CD8-positive, alpha-beta memory T cell (primary cell): ENCODE measurements at regions of chrX and their contacts with region 1.

Region 1: GRCh38 chrX:24054182-24055042 is at the start of gene EIF2S3:
- DNase-seq: peak; percentile 72 to 96 (median 90)
- H3K4me3 ChIP-seq: peak within 1 kb of the TSS; percentile 90
- H3K4me3 Mint-ChIP-seq: peak within 1 kb of the TSS in 1 of 7 donors; percentile 95
- H3K27ac ChIP-seq: peak within 1 kb of the TSS; percentile 90
- H3K27ac Mint-ChIP-seq: peak within 1 kb of the TSS in 2 of 8 donors; percentile 99 to 100
- H3K4me1 ChIP-seq: peaks cover 7% of the 10 kb centered on the region
- H3K4me1 Mint-ChIP-seq: peaks cover 8 to 16% (median 13%) of the 10 kb centered on the region in 3 donors
- H3K27me3 ChIP-seq: no peaks in the 10 kb centered on the region
- H3K27me3 Mint-ChIP-seq: no peaks in the 10 kb centered on the region
- total RNA-seq, gene EIF2S3: 259 to 277 TPM

Region 2: GRCh38 chrX:23742697-23743622 is 311.5 kb before region 1 on chrX and contains the start of gene ACOT9:
- CTCF ChIA-PET with region 1: interaction called, 3 read pairs
- POLR2A ChIA-PET with region 1: interaction called, 13 read pairs
- DNase-seq: peak; percentile 45 to 79 (median 75)
- H3K4me3 ChIP-seq: peak within 1 kb of the TSS; percentile 62
- H3K4me3 Mint-ChIP-seq: peak within 1 kb of the TSS; percentile 85 to 95 (median 90)
- H3K27ac ChIP-seq: peak within 1 kb of the TSS; percentile 71
- H3K27ac Mint-ChIP-seq: peak within 1 kb of the TSS; percentile 86 to 95 (median 93)
- H3K4me1 ChIP-seq: peaks cover 17% of the 10 kb centered on the region
- H3K4me1 Mint-ChIP-seq: peaks cover 27 to 60% (median 45%) of the 10 kb centered on the region in 3 donors
- H3K27me3 ChIP-seq: no peaks in the 10 kb centered on the region
- H3K27me3 Mint-ChIP-seq: no peaks in the 10 kb centered on the region
- total RNA-seq, gene ACOT9: 31.1 to 33.9 TPM

Region 3: GRCh38 chrX:23901805-23902204 is 152.6 kb before region 1 on chrX:
- CTCF ChIA-PET with region 1: interaction called, 47 read pairs
- POLR2A ChIA-PET with region 1: interaction called, 17 read pairs
- DNase-seq: peak in 4 of 5 donors; percentile 1 to 54 (median 29)
- H3K4me3 ChIP-seq: no peak overlapping the region
- H3K4me3 Mint-ChIP-seq: no peak overlapping the region
- H3K27ac ChIP-seq: no peak overlapping the region
- H3K27ac Mint-ChIP-seq: no peak overlapping the region
- H3K4me1 ChIP-seq: no peaks in the 10 kb centered on the region
- H3K4me1 Mint-ChIP-seq: peaks cover 0 to 4% (median 0%) of the 10 kb centered on the region in 3 donors
- H3K27me3 ChIP-seq: no peaks in the 10 kb centered on the region
- H3K27me3 Mint-ChIP-seq: peaks cover 0 to 3% of the 10 kb centered on the region in 2 donors

Region 4: GRCh38 chrX:24024819-24025740 is 29.3 kb before region 1 on chrX:
- CTCF ChIA-PET with region 1: interaction called, 44 read pairs
- POLR2A ChIA-PET with region 1: interaction called, 43 read pairs
- DNase-seq: peak; percentile 70 to 84 (median 79)
- H3K4me3 ChIP-seq: peak overlapping the region; percentile 78
- H3K4me3 Mint-ChIP-seq: peak overlapping the region; percentile 77 to 95 (median 90)
- H3K27ac ChIP-seq: peak overlapping the region; percentile 84
- H3K27ac Mint-ChIP-seq: peak overlapping the region in 7 of 8 donors; percentile 74 to 96 (median 90)
- H3K4me1 ChIP-seq: peaks cover 15% of the 10 kb centered on the region
- H3K4me1 Mint-ChIP-seq: peaks cover 26 to 34% (median 32%) of the 10 kb centered on the region in 3 donors
- H3K27me3 ChIP-seq: no peaks in the 10 kb centered on the region
- H3K27me3 Mint-ChIP-seq: peaks cover 0 to 24% of the 10 kb centered on the region in 2 donors

Region 5: DNA sequence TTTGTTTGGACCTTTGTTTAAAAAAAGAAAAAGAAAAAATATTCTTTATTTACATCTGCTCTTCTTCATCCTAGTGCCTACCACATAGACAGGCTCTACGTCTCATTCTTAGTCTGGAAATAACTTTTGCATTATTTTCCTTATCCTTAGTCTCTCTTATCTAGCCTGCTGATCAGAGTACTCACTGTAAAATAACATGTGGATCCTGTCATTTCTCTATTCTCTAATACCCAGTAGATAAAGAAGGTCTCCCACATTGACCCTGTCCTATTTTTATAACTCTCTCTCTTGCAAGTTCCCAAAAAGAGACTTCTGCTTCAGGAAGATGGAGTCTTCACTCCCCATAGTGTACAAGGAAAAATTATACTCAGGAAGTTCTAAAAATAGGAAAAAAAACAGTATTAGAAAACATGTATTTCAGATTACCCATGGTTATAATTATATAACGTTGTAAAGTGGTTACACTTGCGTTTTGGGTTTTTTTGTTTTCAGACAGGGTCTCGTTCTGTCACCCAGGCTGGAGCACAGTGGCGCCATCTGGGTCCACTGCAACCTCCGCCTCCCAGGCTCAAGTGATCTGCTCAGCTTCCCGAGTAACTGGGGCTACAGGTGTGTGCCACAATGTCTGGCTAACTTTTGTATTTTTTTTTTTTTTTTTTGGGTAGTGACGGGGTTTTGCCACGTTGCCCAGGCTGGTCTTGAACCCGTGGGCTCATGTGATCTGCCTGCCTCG is 118.9 kb after region 1 on chrX:
- CTCF ChIA-PET with region 1: no interaction called
- POLR2A ChIA-PET with region 1: no interaction called
- DNase-seq: no peak
- H3K4me3 ChIP-seq: no peak overlapping the region
- H3K4me3 Mint-ChIP-seq: no peak overlapping the region
- H3K27ac ChIP-seq: no peak overlapping the region
- H3K27ac Mint-ChIP-seq: peak overlapping the region in 3 of 8 donors; percentile 7 to 58 (median 51)
- H3K4me1 ChIP-seq: no peaks in the 10 kb centered on the region
- H3K4me1 Mint-ChIP-seq: peaks cover 33 to 47% (median 38%) of the 10 kb centered on the region in 3 donors
- H3K27me3 ChIP-seq: no peaks in the 10 kb centered on the region
- H3K27me3 Mint-ChIP-seq: no peaks in the 10 kb centered on the region

Region 6: GRCh38 chrX:24464836-24465531 is 410.6 kb after region 1 on chrX and contains the start of gene PDK3:
- CTCF ChIA-PET with region 1: no interaction called
- POLR2A ChIA-PET with region 1: interaction called, 14 read pairs
- DNase-seq: peak; percentile 82 to 94 (median 90)
- H3K4me3 ChIP-seq: peak within 1 kb of the TSS; percentile 71
- H3K4me3 Mint-ChIP-seq: peak within 1 kb of the TSS; percentile 83 to 93 (median 87)
- H3K27ac ChIP-seq: peak within 1 kb of the TSS; percentile 79
- H3K27ac Mint-ChIP-seq: peak within 1 kb of the TSS; percentile 77 to 97 (median 95)
- H3K4me1 ChIP-seq: peaks cover 28% of the 10 kb centered on the region
- H3K4me1 Mint-ChIP-seq: peaks cover 38 to 43% (median 41%) of the 10 kb centered on the region in 3 donors
- H3K27me3 ChIP-seq: no peaks in the 10 kb centered on the region
- H3K27me3 Mint-ChIP-seq: peaks cover 0 to 2% of the 10 kb centered on the region in 2 donors
- total RNA-seq, gene PDK3: 26.0 to 26.4 TPM